CD14-positive monocyte (primary cell): ENCODE measurements at regions of chr1 and their contacts with region 1.

Region 1: DNA sequence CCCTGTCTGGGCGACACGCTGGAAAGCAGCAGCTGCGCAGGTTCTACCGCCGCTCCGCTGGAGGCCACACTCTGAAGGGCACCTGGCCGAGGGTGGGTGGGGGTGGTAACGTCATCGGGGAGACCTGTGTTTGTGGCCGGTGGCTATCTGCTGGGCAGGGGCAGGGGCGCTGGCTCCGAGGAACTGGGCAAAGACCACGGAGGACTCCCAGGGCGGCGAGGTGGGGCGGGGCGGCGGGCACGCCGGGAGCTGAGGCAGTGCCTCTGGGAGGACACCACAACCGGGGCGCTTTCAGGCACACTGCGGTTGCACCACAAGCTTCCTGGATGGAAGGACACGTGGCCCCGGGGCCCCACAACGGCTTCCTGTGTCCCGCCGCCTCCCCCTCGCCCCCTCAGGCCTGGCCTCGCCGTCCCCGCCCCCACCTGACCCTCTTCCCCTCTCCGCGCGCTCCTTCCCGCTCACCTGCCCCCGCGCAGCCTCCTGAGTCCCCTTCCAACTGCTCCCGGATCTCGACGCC is 3.3 kb upstream of the DENND2D start:
- DNase-seq: peak; percentile 73 to 79 (median 74)
- H3K4me3 ChIP-seq: peak overlapping the region; percentile 43 to 77 (median 44)
- H3K4me3 Mint-ChIP-seq: peak overlapping the region; percentile 83 to 90
- H3K27ac ChIP-seq: peak overlapping the region; percentile 89 to 93
- H3K27ac Mint-ChIP-seq: peak overlapping the region; percentile 86 to 98 (median 95)
- H3K4me1 ChIP-seq: peaks cover 85 to 91% of the 10 kb centered on the region in 2 donors
- H3K4me1 Mint-ChIP-seq: peaks cover 87% of the 10 kb centered on the region
- H3K27me3 ChIP-seq: no peaks in the 10 kb centered on the region
- H3K27me3 Mint-ChIP-seq: peaks cover 0 to 2% (median 0%) of the 10 kb centered on the region in 3 donors
- CTCF ChIP-seq: no peak

Region 2: DNA sequence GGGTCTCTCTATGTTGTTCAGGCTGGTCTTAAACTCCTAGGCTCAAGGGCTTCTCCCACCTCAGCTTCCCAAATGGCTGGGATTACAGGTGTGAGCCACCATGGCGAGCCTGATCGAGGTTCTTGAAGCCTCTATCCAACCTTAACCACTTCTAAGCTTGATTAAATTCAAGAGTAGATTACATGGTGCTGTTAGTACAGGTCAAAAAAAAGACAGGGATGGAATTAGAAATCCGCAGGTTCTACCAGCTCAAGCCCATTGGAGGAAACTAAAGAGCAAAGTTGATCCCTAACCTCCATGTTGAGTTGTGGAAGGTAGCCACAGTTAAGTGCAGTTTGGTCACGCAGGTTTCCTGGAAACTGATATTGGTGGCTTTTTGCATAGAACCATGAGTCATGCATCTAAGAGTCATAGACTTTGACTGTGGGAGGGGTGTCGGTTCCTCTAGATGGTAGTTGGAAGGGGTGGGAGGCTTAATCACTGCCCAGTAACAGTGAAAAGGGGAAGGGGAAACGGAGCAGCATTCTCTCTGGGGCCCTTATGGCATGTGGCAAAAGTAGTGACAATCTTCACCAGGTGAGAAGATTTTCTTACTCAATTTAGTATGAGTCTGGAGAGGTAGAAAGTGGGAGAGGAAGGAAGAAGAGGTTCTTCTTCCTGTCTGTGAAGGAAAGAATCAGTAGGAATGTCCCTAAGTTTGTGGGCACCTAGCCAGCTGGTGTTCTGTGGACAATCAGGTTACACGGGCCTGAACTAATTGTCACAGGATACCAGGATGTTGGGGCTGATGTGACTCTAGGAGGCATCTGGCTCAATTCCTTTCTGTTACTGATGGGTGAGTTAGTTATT is 323.8 kb before region 1 on chr1:
- intact Hi-C with region 1: loop called in 1 of 2 experiments (anchors 5 kb)
- DNase-seq: peak; percentile 90 to 98 (median 97)
- H3K4me3 ChIP-seq: peak overlapping the region in 1 of 3 experiments; percentile 98
- H3K4me3 Mint-ChIP-seq: peak overlapping the region; percentile 56 to 75
- H3K27ac ChIP-seq: peak overlapping the region; percentile 81 to 94
- H3K27ac Mint-ChIP-seq: peak overlapping the region; percentile 92 to 98 (median 97)
- H3K4me1 ChIP-seq: peaks cover 47 to 92% of the 10 kb centered on the region in 2 donors
- H3K4me1 Mint-ChIP-seq: peaks cover 90% of the 10 kb centered on the region
- H3K27me3 ChIP-seq: no peaks in the 10 kb centered on the region
- H3K27me3 Mint-ChIP-seq: peaks cover 0 to 3% (median 0%) of the 10 kb centered on the region in 3 donors
- CTCF ChIP-seq: no peak

Region 3: GRCh38 chr1:110893908-110894490 is 309.7 kb before region 1 on chr1:
- intact Hi-C with region 1: no loop called
- DNase-seq: no peak
- H3K4me3 ChIP-seq: no peak overlapping the region
- H3K4me3 Mint-ChIP-seq: no peak overlapping the region
- H3K27ac ChIP-seq: peak overlapping the region in 1 of 2 donors; percentile 54
- H3K27ac Mint-ChIP-seq: peak overlapping the region in 1 of 7 donors; percentile 14
- H3K4me1 ChIP-seq: peaks cover 10 to 16% of the 10 kb centered on the region in 2 donors
- H3K4me1 Mint-ChIP-seq: peaks cover 28% of the 10 kb centered on the region
- H3K27me3 ChIP-seq: no peaks in the 10 kb centered on the region
- H3K27me3 Mint-ChIP-seq: no peaks in the 10 kb centered on the region
- CTCF ChIP-seq: no peak

Region 4: DNA sequence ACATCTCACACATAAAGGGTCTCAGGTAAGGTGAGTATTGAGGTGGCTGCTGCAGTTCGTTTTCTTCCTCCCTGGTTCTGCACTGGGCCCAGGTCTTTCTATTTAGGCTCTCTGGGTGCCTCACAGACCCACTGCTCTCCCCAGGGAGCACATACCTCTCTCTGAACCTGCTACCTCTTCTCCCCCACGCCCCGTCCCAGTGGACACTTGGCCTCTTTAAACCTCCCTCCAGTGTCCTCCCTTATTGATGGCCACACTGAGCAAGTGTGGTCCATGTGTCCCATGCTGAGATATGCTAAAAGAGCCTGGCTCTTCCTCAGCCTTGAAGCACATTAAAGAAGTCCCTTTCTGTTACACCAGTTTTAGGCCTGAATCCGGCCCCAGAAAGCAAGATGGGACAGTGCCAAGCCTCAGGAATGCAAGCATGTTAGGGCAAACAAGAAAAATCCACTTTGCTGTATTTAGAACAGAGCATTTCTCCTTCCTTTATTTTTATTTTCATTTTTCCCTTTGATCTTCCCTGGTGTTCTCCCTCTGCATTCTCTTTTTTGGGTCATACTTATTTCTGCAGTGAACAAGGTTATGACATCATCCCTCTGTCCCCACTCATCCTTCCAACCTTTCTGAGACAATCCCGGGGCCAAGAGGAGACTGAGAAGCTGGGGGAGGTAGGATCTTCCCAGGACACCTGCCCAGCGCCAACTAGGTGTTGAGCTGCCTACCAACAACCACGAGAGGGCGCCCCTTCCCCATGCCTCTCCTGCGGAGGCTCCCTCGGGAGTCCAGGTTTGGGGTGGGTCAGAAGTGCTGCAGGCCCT is 18.8 kb after region 1 on chr1:
- intact Hi-C with region 1: loop called in 1 of 2 experiments (anchors 2 kb)
- DNase-seq: peak; percentile 50 to 74 (median 62)
- H3K4me3 ChIP-seq: peak overlapping the region in 1 of 3 experiments; percentile 52
- H3K4me3 Mint-ChIP-seq: peak overlapping the region in 1 of 2 donors; percentile 81
- H3K27ac ChIP-seq: peak overlapping the region; percentile 43 to 62
- H3K27ac Mint-ChIP-seq: peak overlapping the region; percentile 76 to 89 (median 84)
- H3K4me1 ChIP-seq: peaks cover 60 to 67% of the 10 kb centered on the region in 2 donors
- H3K4me1 Mint-ChIP-seq: peaks cover 69% of the 10 kb centered on the region
- H3K27me3 ChIP-seq: no peaks in the 10 kb centered on the region
- H3K27me3 Mint-ChIP-seq: peaks cover 0 to 8% (median 0%) of the 10 kb centered on the region in 3 donors
- CTCF ChIP-seq: peak; percentile 92

Region 5: DNA sequence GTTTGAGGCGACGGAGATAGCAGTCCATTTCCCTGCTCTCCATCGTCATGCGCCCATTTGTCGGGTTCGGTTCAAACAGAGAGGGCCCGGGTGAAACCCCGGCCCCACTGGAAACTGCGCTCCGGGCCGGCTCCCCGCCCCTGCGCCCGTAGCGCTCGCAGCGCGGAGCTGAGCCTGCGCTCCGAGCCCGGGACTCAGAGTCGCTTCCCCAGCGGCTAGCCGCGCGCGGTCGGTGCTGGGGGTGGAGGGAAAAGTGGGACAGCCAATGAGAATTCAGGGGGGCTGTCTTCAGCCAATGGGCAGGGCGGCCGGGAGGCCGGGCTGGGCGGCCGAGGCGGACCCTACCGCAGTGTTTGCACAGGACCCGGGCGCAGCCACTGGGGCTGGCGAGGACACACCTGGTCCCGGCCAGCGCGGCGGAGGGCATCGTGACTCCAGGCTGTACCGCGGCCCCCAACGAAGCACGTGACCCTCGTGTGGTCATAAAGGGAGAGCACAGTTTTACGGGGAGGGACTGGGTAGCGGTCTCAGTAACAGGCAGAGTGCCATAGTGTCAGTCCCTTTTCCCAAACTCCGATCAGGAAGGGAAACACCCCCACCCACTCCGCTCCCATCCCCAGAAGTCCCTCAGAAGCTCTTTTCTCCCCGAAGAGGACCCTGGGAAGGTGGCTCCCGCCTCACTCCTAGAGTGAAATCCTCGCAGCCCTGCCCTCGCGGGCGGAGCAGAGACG is 535.6 kb after region 1 on chr1 and contains the start of gene INKA2:
- intact Hi-C with region 1: loop called in 1 of 2 experiments (anchors 10 kb)
- DNase-seq: peak; percentile 80 to 86 (median 82)
- H3K4me3 ChIP-seq: peak within 1 kb of the TSS; percentile 46 to 79 (median 63)
- H3K4me3 Mint-ChIP-seq: peak within 1 kb of the TSS; percentile 89 to 98
- H3K27ac ChIP-seq: peak within 1 kb of the TSS; percentile 78 to 81
- H3K27ac Mint-ChIP-seq: peak within 1 kb of the TSS; percentile 83 to 99 (median 95)
- H3K4me1 ChIP-seq: peaks cover 58 to 62% of the 10 kb centered on the region in 2 donors
- H3K4me1 Mint-ChIP-seq: peaks cover 31% of the 10 kb centered on the region
- H3K27me3 ChIP-seq: peaks cover 22 to 54% of the 10 kb centered on the region in 2 donors
- H3K27me3 Mint-ChIP-seq: peaks cover 51 to 70% (median 54%) of the 10 kb centered on the region in 3 donors
- CTCF ChIP-seq: no peak
- polyA plus RNA-seq, gene INKA2: 1.8 to 6.6 (median 2.0) TPM